Activated T-helper 2 cell treated with anti-CD3 and anti-CD28 coated beads, Interferon-gamma antibody, Interleukin-2, Interleukin-4, amounts not matched to agents 10 μg/mL and 5 μg/mL and 100 μg/mL, durations not matched to agents 14 hours and 24 hours and 36 hours (primary cell): ENCODE measurements at regions of chr5 and their contacts with region 1.

Region 1: GRCh38 chr5:119367502-119368237 is 11.9 kb downstream of the TNFAIP8 start:
- DNase-seq: no peak
- H3K4me3 Mint-ChIP-seq: peak overlapping the region; percentile 73
- H3K27ac Mint-ChIP-seq: peak overlapping the region; percentile 92
- H3K4me1 Mint-ChIP-seq: peaks cover 74% of the 10 kb centered on the region
- H3K27me3 Mint-ChIP-seq: no peaks in the 10 kb centered on the region

Region 2: GRCh38 chr5:118354797-118355196 is 1012.9 kb before region 1 on chr5:
- intact Hi-C with region 1: no loop called
- DNase-seq: no peak
- H3K4me3 Mint-ChIP-seq: no peak overlapping the region
- H3K27ac Mint-ChIP-seq: no peak overlapping the region
- H3K4me1 Mint-ChIP-seq: no peaks in the 10 kb centered on the region
- H3K27me3 Mint-ChIP-seq: no peaks in the 10 kb centered on the region

Region 3: DNA sequence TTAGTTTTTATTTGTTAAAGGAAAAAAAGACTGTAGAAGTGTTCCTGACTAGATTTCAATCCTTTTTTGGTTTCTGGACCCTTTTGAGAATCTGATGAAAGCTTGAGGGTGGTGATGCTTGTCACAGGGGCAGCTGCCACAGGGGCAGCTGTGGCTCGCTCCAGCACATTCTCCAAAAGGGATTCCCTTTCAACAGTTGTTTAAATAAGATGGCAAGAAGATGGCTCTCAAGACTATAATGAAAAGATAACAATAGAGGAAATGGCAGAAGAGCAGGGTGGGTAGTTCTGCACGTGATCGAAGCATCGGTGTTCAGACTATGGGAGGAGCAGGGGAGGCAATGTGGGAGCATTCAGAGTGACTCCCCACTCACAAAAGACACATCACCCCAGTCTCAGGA is 58.3 kb before region 1 on chr5:
- intact Hi-C with region 1: loop called (anchors 2 kb)
- DNase-seq: no peak
- H3K4me3 Mint-ChIP-seq: peak overlapping the region; percentile 67
- H3K27ac Mint-ChIP-seq: peak overlapping the region; percentile 96
- H3K4me1 Mint-ChIP-seq: peaks cover 88% of the 10 kb centered on the region
- H3K27me3 Mint-ChIP-seq: no peaks in the 10 kb centered on the region

Region 4: GRCh38 chr5:119355685-119356611 is 11.7 kb before region 1 on chr5 and contains the start of gene TNFAIP8:
- intact Hi-C with region 1: loop called (anchors 1 kb)
- DNase-seq: peak; percentile 46
- H3K4me3 Mint-ChIP-seq: peak within 1 kb of the TSS; percentile 99
- H3K27ac Mint-ChIP-seq: peak within 1 kb of the TSS; percentile 93
- H3K4me1 Mint-ChIP-seq: peaks cover 76% of the 10 kb centered on the region
- H3K27me3 Mint-ChIP-seq: no peaks in the 10 kb centered on the region
- total RNA-seq, gene TNFAIP8: 112 and 117 TPM in 2 replicates

Region 5: DNA sequence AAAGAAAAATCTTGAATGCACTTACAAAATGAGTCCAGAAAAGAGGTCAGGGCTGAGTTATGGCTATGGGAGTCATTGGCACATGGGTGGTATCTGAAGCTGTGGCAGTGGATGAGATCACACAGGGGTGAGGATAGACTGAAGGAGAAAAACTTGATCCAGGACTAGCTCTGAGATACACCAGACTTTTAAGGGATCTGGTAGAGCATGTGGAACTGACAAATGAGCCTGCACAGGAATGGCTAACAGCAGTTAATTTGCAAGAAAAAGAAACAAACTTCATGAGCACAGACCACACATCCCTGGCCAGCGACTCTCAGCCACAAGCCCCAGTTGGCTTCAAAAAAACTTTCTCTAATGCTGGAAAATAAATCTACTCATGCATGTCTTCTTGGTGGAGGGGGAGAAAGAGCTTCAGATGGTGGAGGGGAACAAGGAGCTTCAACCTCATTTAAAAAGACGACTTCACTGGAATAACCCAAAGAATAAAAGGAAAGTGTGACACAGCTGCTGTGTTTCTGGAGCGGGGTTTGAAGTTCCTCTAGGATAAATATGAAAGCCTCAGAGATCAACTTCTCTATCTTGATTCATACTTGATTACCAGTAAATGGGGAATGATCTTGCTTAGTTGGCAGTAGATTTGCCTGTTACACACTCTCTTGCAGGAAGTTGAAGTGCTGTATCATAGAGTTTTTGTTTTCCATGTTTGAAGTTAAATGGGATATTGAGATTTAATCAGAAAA is 21.8 kb after region 1 on chr5:
- intact Hi-C with region 1: loop called (anchors 1 kb)
- DNase-seq: no peak
- H3K4me3 Mint-ChIP-seq: no peak overlapping the region
- H3K27ac Mint-ChIP-seq: peak overlapping the region; percentile 9
- H3K4me1 Mint-ChIP-seq: peaks cover 66% of the 10 kb centered on the region
- H3K27me3 Mint-ChIP-seq: no peaks in the 10 kb centered on the region